ENCODE measurements at regions of chr1 and their contacts with region 1.

Region 1: DNA sequence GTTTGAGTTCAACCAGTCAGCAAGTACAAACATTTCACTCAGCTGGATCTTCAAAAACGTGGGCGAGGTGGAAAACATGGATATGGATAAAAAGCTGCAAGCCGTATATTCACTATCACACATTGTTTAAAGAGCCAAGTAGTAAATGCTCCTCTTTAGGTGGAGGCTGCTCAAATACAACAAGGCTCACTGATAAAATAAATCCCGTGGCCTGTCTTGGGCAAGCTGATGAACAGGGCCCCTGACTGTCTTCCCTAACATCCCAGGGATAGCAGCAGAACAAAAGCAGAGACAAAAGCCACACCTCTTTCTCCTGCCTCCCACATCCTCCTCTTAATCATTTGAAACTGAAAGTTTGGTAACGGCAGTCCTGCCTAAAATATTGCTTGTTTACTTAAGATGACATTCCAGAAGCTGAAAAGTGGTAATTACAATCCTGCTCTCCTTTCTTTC is 357.7 kb downstream of the TTLL7 start:
- ATAC-seq: peak in 5 of 8 experiments; percentile 44 to 75 (median 59)
- H3K4me3 ChIP-seq: no peak overlapping the region
- H3K27ac ChIP-seq: no peak overlapping the region
- H3K4me1 ChIP-seq: peaks cover 7 to 9% of the 10 kb centered on the region in 2 donors

Region 2: DNA sequence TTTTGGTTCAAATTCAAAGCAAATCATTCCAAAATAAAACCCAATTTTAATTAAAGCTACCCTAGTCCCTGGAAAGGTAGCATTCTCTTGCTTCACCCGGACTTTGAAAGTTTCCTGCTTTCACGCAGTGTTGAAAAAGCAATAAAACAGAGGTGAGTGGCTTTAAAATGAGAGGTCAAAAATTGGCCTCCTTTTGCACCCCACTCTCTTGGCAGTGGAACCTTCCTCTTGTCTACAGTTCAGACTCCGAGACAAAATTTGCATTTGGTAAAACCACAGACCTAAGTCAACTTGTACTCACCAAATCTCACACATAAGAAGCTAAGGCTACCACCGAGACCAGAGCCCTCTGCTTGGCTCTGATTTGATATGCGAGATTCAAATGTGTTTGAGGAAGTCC is 105.0 kb after region 1 on chr1:
- in situ Hi-C with region 1: loop called in 1 of 9 experiments (anchors 25 kb)
- ATAC-seq: no peak
- H3K4me3 ChIP-seq: no peak overlapping the region
- H3K27ac ChIP-seq: no peak overlapping the region
- H3K4me1 ChIP-seq: peaks cover 20 to 26% of the 10 kb centered on the region in 2 donors

Region 3: GRCh38 chr1:83815330-83815729 is 174.1 kb after region 1 on chr1:
- in situ Hi-C with region 1: no loop called
- ATAC-seq: peak in 2 of 8 experiments; percentile 90 to 94
- H3K4me3 ChIP-seq: no peak overlapping the region
- H3K27ac ChIP-seq: no peak overlapping the region
- H3K4me1 ChIP-seq: peaks cover 3 to 9% of the 10 kb centered on the region in 2 donors

Region 4: GRCh38 chr1:83920320-83920719 is 279.1 kb after region 1 on chr1:
- in situ Hi-C with region 1: no loop called
- ATAC-seq: no peak
- H3K4me3 ChIP-seq: no peak overlapping the region
- H3K27ac ChIP-seq: no peak overlapping the region
- H3K4me1 ChIP-seq: no peaks in the 10 kb centered on the region

Measured in motor neuron (in vitro differentiated cells).